T-cell (primary cell): ENCODE measurements at regions of chr11 and their contacts with region 1.

Region 1: GRCh38 chr11:9506489-9507276 is 45.9 kb downstream of the ZNF143 start:
- DNase-seq: peak; percentile 27 to 87 (median 64)
- ATAC-seq: peak; percentile 77 to 82 (median 81)
- H3K4me3 ChIP-seq: no peak overlapping the region
- H3K4me3 Mint-ChIP-seq: no peak overlapping the region
- H3K27ac ChIP-seq: no peak overlapping the region
- H3K27ac Mint-ChIP-seq: peak overlapping the region in 1 of 2 donors; percentile 44
- H3K4me1 ChIP-seq: no peaks in the 10 kb centered on the region
- H3K4me1 Mint-ChIP-seq: peaks cover 8 to 10% (median 9%) of the 10 kb centered on the region in 3 donors
- H3K27me3 ChIP-seq: no peaks in the 10 kb centered on the region
- H3K27me3 Mint-ChIP-seq: no peaks in the 10 kb centered on the region

Region 2: DNA sequence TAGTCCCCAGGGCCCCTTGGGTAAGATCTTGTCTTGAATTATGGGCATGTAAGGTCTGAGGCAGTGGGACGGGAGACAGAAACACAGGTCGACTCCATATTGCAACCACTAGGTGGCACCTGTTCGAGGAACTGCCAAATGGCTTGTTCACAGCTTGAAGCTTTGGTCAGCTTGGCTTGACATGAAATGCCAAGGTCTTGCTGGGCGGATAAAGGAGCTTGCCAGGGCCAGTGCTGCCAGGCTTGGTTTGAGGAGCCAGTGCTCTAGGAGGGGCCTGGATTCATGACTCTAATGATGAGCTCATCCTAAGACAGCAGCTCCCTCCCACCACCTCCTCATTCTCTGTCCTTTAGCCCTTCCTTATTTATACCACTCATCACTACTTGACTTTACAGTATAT is 491.0 kb before region 1 on chr11:
- CTCF ChIA-PET with region 1: interaction called, 16 to 77 read pairs
- POLR2A ChIA-PET with region 1: interaction called, 3 to 5 read pairs
- DNase-seq: peak; percentile 14 to 77 (median 38)
- ATAC-seq: peak; percentile 72 to 86 (median 78)
- H3K4me3 ChIP-seq: no peak overlapping the region
- H3K4me3 Mint-ChIP-seq: no peak overlapping the region
- H3K27ac ChIP-seq: no peak overlapping the region
- H3K27ac Mint-ChIP-seq: no peak overlapping the region
- H3K4me1 ChIP-seq: peaks cover 0 to 11% of the 10 kb centered on the region in 2 experiments
- H3K4me1 Mint-ChIP-seq: peaks cover 17 to 25% (median 17%) of the 10 kb centered on the region in 3 donors
- H3K27me3 ChIP-seq: peaks cover 0 to 8% of the 10 kb centered on the region in 2 experiments
- H3K27me3 Mint-ChIP-seq: peaks cover 5 to 10% of the 10 kb centered on the region in 2 donors

Region 3: DNA sequence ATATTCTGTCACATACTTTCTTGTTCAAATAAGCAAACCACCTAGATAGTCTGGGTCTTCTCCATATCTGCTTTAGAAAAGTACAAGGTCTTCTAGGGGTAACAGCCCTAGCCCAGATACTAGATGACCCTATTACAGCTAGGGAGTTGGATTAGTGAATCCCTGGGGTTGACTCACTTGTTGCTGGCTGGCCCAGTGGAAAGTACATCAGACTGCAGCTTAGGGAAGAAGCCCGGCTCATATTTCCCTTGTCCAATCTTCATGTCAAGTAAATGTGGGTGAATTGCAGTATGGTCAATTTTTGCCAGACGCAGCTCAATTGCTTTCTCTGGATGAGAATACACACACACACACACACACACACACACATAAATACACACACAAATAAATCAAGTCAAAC is 336.2 kb before region 1 on chr11:
- CTCF ChIA-PET with region 1: interaction called, 25 to 31 read pairs
- POLR2A ChIA-PET with region 1: interaction called in 1 of 2 experiments, 7 read pairs
- DNase-seq: no peak
- ATAC-seq: no peak
- H3K4me3 ChIP-seq: no peak overlapping the region
- H3K4me3 Mint-ChIP-seq: no peak overlapping the region
- H3K27ac ChIP-seq: no peak overlapping the region
- H3K27ac Mint-ChIP-seq: no peak overlapping the region
- H3K4me1 ChIP-seq: no peaks in the 10 kb centered on the region
- H3K4me1 Mint-ChIP-seq: peaks cover 4 to 11% (median 6%) of the 10 kb centered on the region in 3 donors
- H3K27me3 ChIP-seq: no peaks in the 10 kb centered on the region
- H3K27me3 Mint-ChIP-seq: no peaks in the 10 kb centered on the region

Region 4: DNA sequence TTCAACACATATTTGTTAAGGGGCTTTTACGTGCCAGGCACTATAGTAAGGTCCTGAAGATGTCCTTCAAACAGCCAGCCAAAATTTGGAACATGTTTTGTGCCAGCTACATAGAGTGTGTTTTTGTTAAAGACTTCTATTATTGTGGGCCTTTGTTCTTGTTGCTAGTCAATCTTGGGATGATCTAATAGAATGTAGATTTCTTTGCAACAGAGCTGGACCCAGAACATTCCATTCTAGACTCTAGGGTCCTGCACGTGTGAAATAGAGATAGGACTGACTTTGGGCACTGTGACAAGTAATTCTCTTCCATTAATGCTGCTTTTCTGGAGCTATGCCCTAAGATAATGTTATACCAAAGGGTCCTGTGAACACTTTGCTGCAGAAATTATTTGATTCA is 139.1 kb before region 1 on chr11:
- CTCF ChIA-PET with region 1: no interaction called
- POLR2A ChIA-PET with region 1: no interaction called
- DNase-seq: no peak
- ATAC-seq: no peak
- H3K4me3 ChIP-seq: no peak overlapping the region
- H3K4me3 Mint-ChIP-seq: no peak overlapping the region
- H3K27ac ChIP-seq: no peak overlapping the region
- H3K27ac Mint-ChIP-seq: no peak overlapping the region
- H3K4me1 ChIP-seq: peaks cover 4 to 13% of the 10 kb centered on the region in 2 experiments
- H3K4me1 Mint-ChIP-seq: peaks cover 0 to 20% (median 15%) of the 10 kb centered on the region in 3 donors
- H3K27me3 ChIP-seq: no peaks in the 10 kb centered on the region
- H3K27me3 Mint-ChIP-seq: peaks cover 0 to 2% of the 10 kb centered on the region in 2 donors

Region 5: DNA sequence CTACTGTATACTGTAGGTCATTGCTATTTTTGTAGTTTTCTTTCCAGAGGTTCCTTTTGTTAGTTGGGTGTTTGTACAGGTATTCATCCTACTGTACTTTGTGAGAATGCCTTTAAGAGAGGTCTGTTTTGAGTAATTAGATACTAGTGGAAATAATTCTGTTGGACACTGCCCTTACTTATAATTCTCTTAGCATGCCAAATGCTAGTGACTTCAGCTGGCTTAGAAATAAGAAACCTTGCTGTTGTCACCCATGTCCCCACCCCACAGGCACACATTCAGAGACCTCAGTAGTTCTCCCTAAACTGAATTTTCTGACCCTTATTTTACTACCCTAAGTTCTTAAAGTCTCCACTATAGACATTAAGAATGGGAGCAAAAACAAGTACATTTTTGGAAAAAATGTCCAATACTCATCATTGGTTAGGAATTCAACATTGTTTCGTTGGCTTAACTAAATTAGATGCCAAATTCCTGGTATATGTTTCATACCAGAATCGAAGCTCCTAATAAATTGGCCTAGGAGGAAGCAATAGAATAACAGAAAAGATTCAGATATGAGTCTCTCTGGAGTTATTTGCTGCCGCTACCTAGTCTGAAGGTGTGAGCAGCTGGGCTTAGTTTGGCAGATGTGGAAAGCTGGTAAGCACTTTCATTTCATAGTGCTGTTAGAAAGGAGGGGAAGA is 17.5 kb before region 1 on chr11:
- CTCF ChIA-PET with region 1: interaction called, 4 to 11 read pairs
- POLR2A ChIA-PET with region 1: no interaction called
- DNase-seq: no peak
- ATAC-seq: no peak
- H3K4me3 ChIP-seq: no peak overlapping the region
- H3K4me3 Mint-ChIP-seq: no peak overlapping the region
- H3K27ac ChIP-seq: no peak overlapping the region
- H3K27ac Mint-ChIP-seq: no peak overlapping the region
- H3K4me1 ChIP-seq: no peaks in the 10 kb centered on the region
- H3K4me1 Mint-ChIP-seq: no peaks in the 10 kb centered on the region
- H3K27me3 ChIP-seq: no peaks in the 10 kb centered on the region
- H3K27me3 Mint-ChIP-seq: no peaks in the 10 kb centered on the region

Region 6: GRCh38 chr11:9596926-9597464 is 90.3 kb after region 1 on chr11:
- CTCF ChIA-PET with region 1: no interaction called
- POLR2A ChIA-PET with region 1: no interaction called
- DNase-seq: no peak
- ATAC-seq: no peak
- H3K4me3 ChIP-seq: no peak overlapping the region
- H3K4me3 Mint-ChIP-seq: no peak overlapping the region
- H3K27ac ChIP-seq: no peak overlapping the region
- H3K27ac Mint-ChIP-seq: no peak overlapping the region
- H3K4me1 ChIP-seq: peaks cover 3 to 18% of the 10 kb centered on the region in 2 experiments
- H3K4me1 Mint-ChIP-seq: peaks cover 16 to 20% (median 18%) of the 10 kb centered on the region in 3 donors
- H3K27me3 ChIP-seq: no peaks in the 10 kb centered on the region
- H3K27me3 Mint-ChIP-seq: no peaks in the 10 kb centered on the region